ENCODE measurements at regions of chr9 and their contacts with region 1.

Region 1: GRCh38 chr9:5832543-5833529 is at the start of gene ERMP1:
- DNase-seq: peak; percentile 91
- H3K4me3 Mint-ChIP-seq: peak within 1 kb of the TSS; percentile 85
- H3K27ac Mint-ChIP-seq: peak within 1 kb of the TSS; percentile 84
- H3K4me1 Mint-ChIP-seq: peaks cover 54% of the 10 kb centered on the region
- H3K27me3 Mint-ChIP-seq: no peaks in the 10 kb centered on the region
- total RNA-seq, gene ERMP1: 35.1 to 39.1 TPM

Region 2: DNA sequence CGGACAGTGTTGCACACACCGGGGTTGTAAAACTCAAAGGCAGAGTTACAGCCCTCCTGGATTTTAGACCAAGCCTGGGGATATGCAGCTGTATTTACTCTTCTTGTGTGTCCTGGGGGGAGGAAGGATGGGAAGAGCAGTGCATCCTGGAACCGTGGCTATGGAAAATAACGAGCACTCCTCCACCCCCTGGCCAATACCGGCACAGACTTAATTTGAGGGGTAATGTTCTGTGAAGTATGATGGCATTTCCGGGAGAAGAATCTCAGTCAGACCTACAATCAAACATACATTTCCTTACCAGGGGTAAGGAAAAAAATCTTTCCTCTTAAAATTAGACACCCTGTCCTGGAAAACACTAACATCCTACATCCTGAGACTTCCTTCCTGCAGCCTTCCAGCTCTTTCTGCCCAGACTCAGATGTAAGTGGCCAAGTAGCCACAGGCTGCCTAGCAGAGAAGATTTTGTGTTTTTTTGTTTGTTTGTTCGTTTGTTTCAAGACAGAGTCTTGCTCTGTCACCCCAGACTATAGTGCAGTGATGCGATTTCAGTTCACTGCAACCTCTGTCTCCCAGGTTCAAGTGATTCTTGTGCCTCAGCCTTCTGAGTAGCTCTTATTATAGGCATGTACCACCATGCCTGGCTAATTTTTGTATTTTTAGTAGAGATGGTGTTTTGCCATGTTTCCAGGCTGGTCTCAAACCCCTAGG is 11.1 kb after region 1 on chr9:
- CTCF ChIA-PET with region 1: interaction called, 64 read pairs
- POLR2A ChIA-PET with region 1: interaction called, 74 read pairs
- DNase-seq: no peak
- H3K4me3 Mint-ChIP-seq: peak overlapping the region; percentile 60
- H3K27ac Mint-ChIP-seq: peak overlapping the region; percentile 97
- H3K4me1 Mint-ChIP-seq: peaks cover 86% of the 10 kb centered on the region
- H3K27me3 Mint-ChIP-seq: no peaks in the 10 kb centered on the region

Region 3: DNA sequence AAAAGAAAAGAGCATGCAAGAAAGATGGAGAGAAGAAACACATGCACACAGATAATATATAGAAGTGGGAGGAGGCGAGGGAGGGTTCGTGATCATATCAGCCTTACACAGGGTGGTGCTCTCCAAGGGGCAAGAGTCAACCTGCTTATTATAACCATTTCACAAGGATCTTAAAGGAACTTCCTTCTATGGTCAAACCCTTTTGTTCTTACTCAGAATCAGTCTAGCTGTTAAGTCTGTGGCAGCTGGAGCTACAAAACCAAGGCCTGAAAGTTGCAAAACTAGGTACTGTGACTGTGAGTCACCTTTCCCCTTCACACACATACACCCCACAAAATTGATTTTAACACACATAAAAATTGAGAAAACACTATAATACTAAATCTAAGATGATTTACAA is 18.6 kb after region 1 on chr9:
- CTCF ChIA-PET with region 1: interaction called, 38 read pairs
- POLR2A ChIA-PET with region 1: interaction called, 74 read pairs
- DNase-seq: peak; percentile 67
- H3K4me3 Mint-ChIP-seq: peak overlapping the region; percentile 14
- H3K27ac Mint-ChIP-seq: peak overlapping the region; percentile 76
- H3K4me1 Mint-ChIP-seq: peaks cover 66% of the 10 kb centered on the region
- H3K27me3 Mint-ChIP-seq: no peaks in the 10 kb centered on the region

Region 4: GRCh38 chr9:5879419-5880181 is 46.8 kb after region 1 on chr9:
- CTCF ChIA-PET with region 1: interaction called, 41 read pairs
- POLR2A ChIA-PET with region 1: interaction called, 3 read pairs
- DNase-seq: no peak
- H3K4me3 Mint-ChIP-seq: no peak overlapping the region
- H3K27ac Mint-ChIP-seq: no peak overlapping the region
- H3K4me1 Mint-ChIP-seq: peaks cover 26% of the 10 kb centered on the region
- H3K27me3 Mint-ChIP-seq: no peaks in the 10 kb centered on the region

Region 5: DNA sequence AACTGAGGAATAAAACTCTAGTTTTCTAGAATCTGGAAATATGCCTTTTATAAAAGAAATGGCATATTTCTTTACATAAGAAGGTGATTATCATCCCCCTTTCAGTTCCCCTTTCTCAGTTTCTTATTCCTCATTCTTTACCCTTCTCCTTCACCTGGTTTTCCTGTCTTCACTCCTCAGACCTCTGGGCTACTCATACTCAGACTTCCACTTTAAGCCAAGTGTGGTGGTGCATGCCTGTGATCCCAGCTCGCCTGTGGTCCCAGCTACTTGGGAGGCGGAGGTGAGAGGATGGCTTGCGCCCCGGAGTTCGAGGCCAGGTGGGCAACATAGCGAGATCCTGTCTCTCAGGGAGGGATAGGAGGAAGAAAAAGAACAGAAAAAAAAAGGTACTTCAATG is 125.4 kb after region 1 on chr9:
- CTCF ChIA-PET with region 1: no interaction called
- POLR2A ChIA-PET with region 1: no interaction called
- DNase-seq: no peak
- H3K4me3 Mint-ChIP-seq: no peak overlapping the region
- H3K27ac Mint-ChIP-seq: no peak overlapping the region
- H3K4me1 Mint-ChIP-seq: peaks cover 6% of the 10 kb centered on the region
- H3K27me3 Mint-ChIP-seq: no peaks in the 10 kb centered on the region